ENCODE measurements at regions of chr5 and their contacts with region 1.

Region 1: GRCh38 chr5:141338538-141339306 is at the start of gene PCDHGA2:
- DNase-seq: peak; percentile 39
- ATAC-seq: no peak
- H3K4me3 Mint-ChIP-seq: peak within 1 kb of the TSS; percentile 15
- H3K27ac Mint-ChIP-seq: no peak within 1 kb of the TSS
- H3K4me1 Mint-ChIP-seq: no peaks in the 10 kb centered on the region
- H3K27me3 Mint-ChIP-seq: peaks cover 65% of the 10 kb centered on the region
- total RNA-seq, gene PCDHGA2: not detected

Region 2: DNA sequence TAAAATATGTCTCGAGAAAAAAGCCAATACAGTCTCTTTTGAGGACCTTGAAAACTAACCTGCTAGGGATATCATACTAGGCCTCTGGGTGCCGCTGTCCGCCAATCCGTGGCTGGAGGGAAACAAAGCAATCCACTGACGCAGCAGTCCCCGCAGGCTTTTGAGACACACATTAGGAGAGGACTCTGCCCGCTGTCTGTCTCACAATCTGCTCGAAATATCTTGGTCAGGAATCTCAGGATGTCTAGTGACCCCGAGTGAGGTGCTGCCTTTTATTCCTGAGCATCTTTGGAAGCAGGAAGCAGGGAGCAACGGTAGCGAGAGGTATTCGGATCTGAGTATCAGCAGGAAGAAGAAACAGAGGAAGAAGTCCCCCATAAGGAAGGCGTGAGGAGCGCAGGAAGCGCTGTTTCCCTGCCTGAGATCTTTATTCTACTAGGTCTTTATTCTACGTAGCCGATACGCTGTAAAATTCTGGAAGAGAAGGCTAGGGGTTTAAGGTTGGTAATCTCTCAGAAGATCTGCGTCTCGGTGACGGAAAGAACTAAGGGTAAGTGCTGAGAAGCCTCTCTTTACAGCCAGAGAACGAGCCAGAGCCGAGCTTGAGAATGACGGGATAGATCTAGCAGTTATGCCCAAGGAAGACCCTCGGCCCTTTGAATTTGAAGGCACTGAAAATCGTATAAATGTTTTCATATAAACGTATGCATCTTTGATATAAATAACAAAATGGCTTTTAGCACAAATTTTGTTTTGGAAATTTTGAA is 12.5 kb before region 1 on chr5:
- CTCF ChIA-PET with region 1: interaction called, 22 read pairs
- POLR2A ChIA-PET with region 1: no interaction called
- intact Hi-C with region 1: no loop called
- DNase-seq: peak; percentile 84
- ATAC-seq: peak; percentile 94
- H3K4me3 Mint-ChIP-seq: peak overlapping the region; percentile 72
- H3K27ac Mint-ChIP-seq: peak overlapping the region; percentile 72
- H3K4me1 Mint-ChIP-seq: peaks cover 4% of the 10 kb centered on the region
- H3K27me3 Mint-ChIP-seq: peaks cover 29% of the 10 kb centered on the region

Measured in activated CD4-positive, alpha-beta T cell treated with anti-CD3 and anti-CD28 coated beads for 36 hours (primary cell).